PC-9 (cell line): ENCODE measurements at regions of chr12 and their contacts with region 1.

Region 1: DNA sequence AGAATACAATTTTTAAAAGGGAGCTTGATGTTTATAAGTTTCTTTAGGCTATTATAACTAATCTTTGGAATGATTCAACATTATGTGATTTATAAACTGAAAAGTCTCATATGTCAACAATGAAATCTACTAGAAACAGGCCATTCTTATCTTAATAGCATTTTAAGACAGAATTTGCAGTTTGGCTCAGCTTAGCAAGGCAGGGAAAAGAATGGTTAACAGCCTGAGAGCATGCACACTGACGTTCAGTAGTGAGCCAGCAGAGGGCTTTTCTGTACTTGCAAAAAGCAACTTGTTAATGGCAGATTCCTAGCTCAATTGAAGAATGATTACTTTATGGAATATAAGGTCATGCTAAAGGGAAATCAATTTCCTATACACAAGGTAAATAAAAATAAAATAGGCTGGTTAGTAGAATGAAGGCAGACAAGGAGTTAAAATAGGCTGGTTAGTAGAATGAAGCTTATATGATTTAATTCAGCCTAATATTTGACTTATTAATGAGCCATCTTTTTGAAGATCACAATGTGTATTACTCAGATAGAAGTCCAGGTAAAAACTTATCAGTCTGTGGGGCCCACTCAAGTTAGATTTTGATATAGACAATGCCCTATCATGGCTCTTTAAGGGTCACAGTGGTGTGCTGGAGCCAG is 95.9 kb downstream of the OTOGL start:
- DNase-seq: peak in 1 of 2 experiments; percentile 17
- H3K4me3 ChIP-seq: no peak overlapping the region
- H3K27ac ChIP-seq: no peak overlapping the region
- H3K4me1 ChIP-seq: no peaks in the 10 kb centered on the region
- H3K27me3 ChIP-seq: no peaks in the 10 kb centered on the region
- CTCF ChIP-seq: peak; percentile 69

Region 2: DNA sequence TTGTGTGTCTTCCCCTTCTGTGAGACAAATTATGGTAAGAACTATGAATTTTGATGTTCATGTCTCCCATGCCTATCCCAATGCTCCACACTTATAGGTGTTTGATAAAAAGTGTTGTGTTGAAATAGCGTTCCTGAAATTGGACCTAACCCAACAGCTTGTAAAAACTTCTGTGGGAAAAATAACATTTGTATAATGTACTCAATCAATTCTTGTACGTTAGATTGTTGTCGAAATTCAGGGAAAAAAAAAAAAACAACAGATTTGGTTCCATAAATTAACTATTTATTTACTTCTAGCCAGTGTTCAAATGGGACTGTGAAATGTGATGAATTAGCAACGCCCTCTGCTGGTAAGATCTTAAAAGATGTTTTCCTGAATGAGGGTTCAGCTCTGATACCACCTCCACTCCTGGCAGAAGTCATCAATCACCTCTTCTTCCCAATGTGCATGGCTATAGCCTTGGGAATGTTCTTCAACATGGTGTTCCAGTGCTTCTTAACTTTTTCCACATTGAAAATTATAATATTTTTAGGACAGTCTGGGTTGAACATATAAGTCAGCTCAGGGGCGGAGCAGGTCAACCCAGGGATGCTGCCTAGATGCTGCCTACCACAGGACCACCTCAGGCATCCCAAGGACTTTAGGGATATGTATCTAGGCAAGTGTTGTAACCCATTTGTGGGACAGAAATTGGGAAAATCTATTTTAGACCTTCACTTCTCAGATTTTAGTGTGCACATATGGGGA is 74.8 kb after region 1 on chr12:
- CTCF ChIA-PET with region 1: interaction called, 20 read pairs
- POLR2A ChIA-PET with region 1: interaction called, 5 read pairs
- intact Hi-C with region 1: loop called (anchors 1 kb)
- DNase-seq: no peak
- H3K4me3 ChIP-seq: no peak overlapping the region
- H3K27ac ChIP-seq: no peak overlapping the region
- H3K4me1 ChIP-seq: peaks cover 20% of the 10 kb centered on the region
- H3K27me3 ChIP-seq: no peaks in the 10 kb centered on the region
- CTCF ChIP-seq: peak; percentile 84

Region 3: GRCh38 chr12:80412369-80412953 is 217.3 kb after region 1 on chr12:
- CTCF ChIA-PET with region 1: no interaction called
- POLR2A ChIA-PET with region 1: no interaction called
- intact Hi-C with region 1: loop called (anchors 10 kb)
- DNase-seq: no peak
- H3K4me3 ChIP-seq: no peak overlapping the region
- H3K27ac ChIP-seq: no peak overlapping the region
- H3K4me1 ChIP-seq: no peaks in the 10 kb centered on the region
- H3K27me3 ChIP-seq: no peaks in the 10 kb centered on the region
- CTCF ChIP-seq: peak; percentile 88

Region 4: GRCh38 chr12:80763874-80764273 is 568.7 kb after region 1 on chr12:
- CTCF ChIA-PET with region 1: interaction called, 4 read pairs
- POLR2A ChIA-PET with region 1: no interaction called
- intact Hi-C with region 1: loop called (anchors 2 kb)
- DNase-seq: peak; percentile 7 to 40
- H3K4me3 ChIP-seq: no peak overlapping the region
- H3K27ac ChIP-seq: no peak overlapping the region
- H3K4me1 ChIP-seq: no peaks in the 10 kb centered on the region
- H3K27me3 ChIP-seq: no peaks in the 10 kb centered on the region
- CTCF ChIP-seq: peak; percentile 85

Region 5: GRCh38 chr12:81257947-81258551 is 1062.8 kb after region 1 on chr12:
- CTCF ChIA-PET with region 1: interaction called, 5 read pairs
- POLR2A ChIA-PET with region 1: no interaction called
- intact Hi-C with region 1: loop called (anchors 10 kb)
- DNase-seq: peak in 1 of 2 experiments; percentile 40
- H3K4me3 ChIP-seq: no peak overlapping the region
- H3K27ac ChIP-seq: no peak overlapping the region
- H3K4me1 ChIP-seq: no peaks in the 10 kb centered on the region
- H3K27me3 ChIP-seq: no peaks in the 10 kb centered on the region
- CTCF ChIP-seq: peak; percentile 76

Region 6: GRCh38 chr12:81627336-81628189 is 1432.4 kb after region 1 on chr12:
- CTCF ChIA-PET with region 1: no interaction called
- POLR2A ChIA-PET with region 1: no interaction called
- intact Hi-C with region 1: loop called (anchors 10 kb)
- DNase-seq: peak in 1 of 2 experiments; percentile 2
- H3K4me3 ChIP-seq: no peak overlapping the region
- H3K27ac ChIP-seq: no peak overlapping the region
- H3K4me1 ChIP-seq: no peaks in the 10 kb centered on the region
- H3K27me3 ChIP-seq: no peaks in the 10 kb centered on the region
- CTCF ChIP-seq: peak; percentile 77